Activated T-helper 2 cell treated with anti-CD3 and anti-CD28 coated beads, Interferon-gamma antibody, Interleukin-2, Interleukin-4, amounts not matched to agents 10 μg/mL and 5 μg/mL and 100 μg/mL, durations not matched to agents 14 hours and 24 hours and 36 hours (primary cell): ENCODE measurements at regions of chr4 and their contacts with region 1.

Region 1: GRCh38 chr4:47836641-47837093 is 1.2 kb downstream of the CORIN start:
- DNase-seq: peak; percentile 22
- H3K4me3 Mint-ChIP-seq: peak overlapping the region; percentile 79
- H3K27ac Mint-ChIP-seq: no peak overlapping the region
- H3K4me1 Mint-ChIP-seq: peaks cover 23% of the 10 kb centered on the region
- H3K27me3 Mint-ChIP-seq: peaks cover 44% of the 10 kb centered on the region

Region 2: GRCh38 chr4:47704693-47705325 is 131.9 kb before region 1 on chr4:
- intact Hi-C with region 1: loop called (anchors 5 kb)
- DNase-seq: no peak
- H3K4me3 Mint-ChIP-seq: no peak overlapping the region
- H3K27ac Mint-ChIP-seq: no peak overlapping the region
- H3K4me1 Mint-ChIP-seq: no peaks in the 10 kb centered on the region
- H3K27me3 Mint-ChIP-seq: peaks cover 18% of the 10 kb centered on the region

Region 3: GRCh38 chr4:47852136-47852535 is 15.5 kb after region 1 on chr4:
- intact Hi-C with region 1: no loop called
- DNase-seq: no peak
- H3K4me3 Mint-ChIP-seq: no peak overlapping the region
- H3K27ac Mint-ChIP-seq: no peak overlapping the region
- H3K4me1 Mint-ChIP-seq: no peaks in the 10 kb centered on the region
- H3K27me3 Mint-ChIP-seq: no peaks in the 10 kb centered on the region

Region 4: DNA sequence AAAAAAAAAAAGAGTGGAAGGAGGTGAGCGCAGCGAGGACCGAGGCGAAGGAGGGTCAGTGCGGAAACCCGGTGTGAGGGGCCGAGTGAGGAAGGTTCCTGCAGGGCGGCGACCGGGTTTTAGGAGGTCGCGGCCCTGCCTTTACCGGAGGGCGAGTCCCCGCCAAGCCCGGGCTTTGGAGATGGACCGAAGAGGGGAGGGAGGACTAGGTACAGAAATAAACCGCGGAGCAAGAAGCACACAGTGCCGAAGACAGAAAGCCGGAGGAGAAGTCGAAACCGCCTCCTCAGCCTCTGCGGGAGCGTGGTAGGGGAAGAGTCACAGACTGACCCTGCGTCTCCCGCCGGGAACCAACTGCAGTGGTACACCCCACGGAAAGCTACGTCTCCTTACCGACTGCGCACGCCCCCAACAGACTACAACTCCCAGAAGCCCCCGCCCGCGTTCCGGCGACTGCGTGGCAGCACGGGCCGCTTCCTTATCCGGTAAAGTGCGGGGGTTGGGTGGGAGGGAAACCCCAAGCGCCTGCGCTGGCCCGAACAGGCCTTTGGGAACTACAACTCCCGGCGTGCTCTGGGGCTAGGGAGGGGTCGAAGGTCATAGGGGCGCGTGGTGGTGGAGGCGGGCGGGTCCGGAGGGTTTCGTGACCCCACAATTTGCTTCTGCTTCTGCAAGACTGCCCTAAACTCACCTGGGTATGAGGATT is 77.7 kb after region 1 on chr4 and contains the start of gene NFXL1:
- intact Hi-C with region 1: loop called (anchors 2 kb)
- DNase-seq: peak; percentile 93
- H3K4me3 Mint-ChIP-seq: peak within 1 kb of the TSS; percentile 90
- H3K27ac Mint-ChIP-seq: peak within 1 kb of the TSS; percentile 83
- H3K4me1 Mint-ChIP-seq: peaks cover 22% of the 10 kb centered on the region
- H3K27me3 Mint-ChIP-seq: no peaks in the 10 kb centered on the region
- total RNA-seq, gene NFXL1: 11.9 and 13.3 TPM in 2 replicates

Region 5: GRCh38 chr4:48033825-48034413 is 197.3 kb after region 1 on chr4:
- intact Hi-C with region 1: loop called (anchors 5 kb)
- DNase-seq: no peak
- H3K4me3 Mint-ChIP-seq: no peak overlapping the region
- H3K27ac Mint-ChIP-seq: no peak overlapping the region
- H3K4me1 Mint-ChIP-seq: peaks cover 22% of the 10 kb centered on the region
- H3K27me3 Mint-ChIP-seq: peaks cover 39% of the 10 kb centered on the region

Region 6: GRCh38 chr4:48340965-48341775 is 504.5 kb after region 1 on chr4 and contains the start of gene SLAIN2:
- intact Hi-C with region 1: loop called (anchors 10 kb)
- DNase-seq: peak; percentile 98
- H3K4me3 Mint-ChIP-seq: peak within 1 kb of the TSS; percentile 98
- H3K27ac Mint-ChIP-seq: peak within 1 kb of the TSS; percentile 97
- H3K4me1 Mint-ChIP-seq: peaks cover 61% of the 10 kb centered on the region
- H3K27me3 Mint-ChIP-seq: no peaks in the 10 kb centered on the region
- total RNA-seq, gene SLAIN2: 60.4 and 67.1 TPM in 2 replicates